Transverse colon (tissue), 4 donors: ENCODE measurements at regions of chr17 and their contacts with region 1.

Region 1: DNA sequence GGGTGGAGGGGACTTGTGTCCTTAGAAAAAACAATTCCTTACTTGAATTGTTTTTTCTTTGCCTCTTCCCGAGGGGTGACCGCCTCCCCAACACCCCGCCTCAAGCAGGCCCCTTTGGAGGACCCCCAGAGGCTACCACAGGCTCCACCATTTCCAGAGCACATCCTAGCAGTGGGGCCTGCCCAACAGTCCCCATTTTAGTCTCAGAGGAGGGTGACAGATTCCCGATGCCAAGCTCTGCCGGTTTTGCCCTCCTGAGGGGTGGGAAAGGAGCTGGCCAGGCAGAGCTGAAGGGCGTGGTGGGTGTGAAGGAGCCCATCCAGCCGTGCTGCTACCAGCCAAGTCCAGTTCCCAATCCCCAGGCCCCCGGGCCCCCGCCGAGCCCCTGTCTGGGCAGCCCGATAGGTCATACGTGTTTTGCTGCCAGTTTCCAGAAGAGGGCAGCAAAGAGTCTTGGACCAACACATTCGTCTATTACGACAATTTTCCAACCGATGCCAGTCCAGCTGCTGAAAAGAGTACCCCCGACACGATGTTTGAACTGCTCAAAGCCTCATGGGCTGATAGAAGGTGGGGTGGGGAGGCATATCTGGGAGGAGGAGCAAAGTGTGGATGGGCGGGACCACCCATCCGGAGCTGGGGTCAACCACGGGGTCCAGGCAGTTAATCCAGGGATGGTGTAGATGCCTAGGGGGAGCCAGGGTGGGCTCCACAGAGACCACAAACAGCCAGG is 18.8 kb upstream of the GAA start:
- DNase-seq: peak; percentile 57
- H3K4me3 ChIP-seq: no peak overlapping the region
- H3K27ac ChIP-seq: no peak overlapping the region
- H3K4me1 ChIP-seq: peaks cover 4 to 7% (median 6%) of the 10 kb centered on the region in 4 donors
- H3K27me3 ChIP-seq: no peaks in the 10 kb centered on the region
- CTCF ChIP-seq: peak; percentile 72 to 83 (median 81)
- EP300 ChIP-seq: no peak
- POLR2A ChIP-seq: no peak

Region 2: DNA sequence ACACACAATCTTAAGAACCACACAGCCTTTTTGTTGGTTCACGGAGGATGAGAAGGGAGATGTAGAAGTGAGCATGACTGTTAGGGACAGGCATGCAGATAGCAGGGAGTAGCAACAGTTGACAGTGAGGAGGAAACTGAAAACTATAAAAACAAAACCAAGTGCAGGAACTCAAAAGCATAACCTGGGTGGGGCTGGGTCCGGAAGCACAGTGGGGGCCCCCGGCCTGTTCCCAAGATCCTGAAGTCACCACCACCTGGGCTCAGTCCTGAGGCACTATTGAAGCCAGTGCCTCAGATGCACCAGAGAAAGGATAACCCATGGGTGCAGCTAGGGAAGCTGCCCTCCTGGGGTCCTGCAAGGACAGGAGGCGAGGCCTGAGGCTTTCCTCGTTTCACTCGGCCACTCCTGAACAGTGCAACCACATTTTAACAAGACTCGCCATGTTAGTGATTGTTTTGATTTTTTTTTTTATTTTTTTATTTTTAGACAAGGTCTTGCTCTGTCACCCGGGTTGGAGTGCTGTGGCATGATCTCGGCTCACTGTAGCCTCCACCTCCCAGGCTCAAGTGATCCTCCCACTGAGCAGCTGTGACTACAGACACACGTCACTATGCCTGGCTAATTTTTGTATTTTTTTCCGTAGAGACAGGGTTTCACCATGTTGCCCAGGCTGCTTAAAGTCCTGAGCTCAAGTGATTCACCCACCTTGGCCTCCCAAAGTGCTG is 215.6 kb before region 1 on chr17:
- in situ Hi-C with region 1: no loop called
- intact Hi-C with region 1: no loop called
- DNase-seq: no peak
- H3K4me3 ChIP-seq: no peak overlapping the region
- H3K27ac ChIP-seq: no peak overlapping the region
- H3K4me1 ChIP-seq: peaks cover 0 to 4% (median 0%) of the 10 kb centered on the region in 4 donors
- H3K27me3 ChIP-seq: no peaks in the 10 kb centered on the region
- CTCF ChIP-seq: no peak
- EP300 ChIP-seq: no peak
- POLR2A ChIP-seq: no peak

Region 3: GRCh38 chr17:80008383-80008840 is 74.2 kb before region 1 on chr17:
- in situ Hi-C with region 1: no loop called
- intact Hi-C with region 1: loop called (anchors 10 kb)
- DNase-seq: peak; percentile 86
- H3K4me3 ChIP-seq: no peak overlapping the region
- H3K27ac ChIP-seq: no peak overlapping the region
- H3K4me1 ChIP-seq: peaks cover 4 to 13% (median 8%) of the 10 kb centered on the region in 4 donors
- H3K27me3 ChIP-seq: no peaks in the 10 kb centered on the region
- CTCF ChIP-seq: peak; percentile 93 to 97 (median 95)
- EP300 ChIP-seq: no peak
- POLR2A ChIP-seq: no peak

Region 4: DNA sequence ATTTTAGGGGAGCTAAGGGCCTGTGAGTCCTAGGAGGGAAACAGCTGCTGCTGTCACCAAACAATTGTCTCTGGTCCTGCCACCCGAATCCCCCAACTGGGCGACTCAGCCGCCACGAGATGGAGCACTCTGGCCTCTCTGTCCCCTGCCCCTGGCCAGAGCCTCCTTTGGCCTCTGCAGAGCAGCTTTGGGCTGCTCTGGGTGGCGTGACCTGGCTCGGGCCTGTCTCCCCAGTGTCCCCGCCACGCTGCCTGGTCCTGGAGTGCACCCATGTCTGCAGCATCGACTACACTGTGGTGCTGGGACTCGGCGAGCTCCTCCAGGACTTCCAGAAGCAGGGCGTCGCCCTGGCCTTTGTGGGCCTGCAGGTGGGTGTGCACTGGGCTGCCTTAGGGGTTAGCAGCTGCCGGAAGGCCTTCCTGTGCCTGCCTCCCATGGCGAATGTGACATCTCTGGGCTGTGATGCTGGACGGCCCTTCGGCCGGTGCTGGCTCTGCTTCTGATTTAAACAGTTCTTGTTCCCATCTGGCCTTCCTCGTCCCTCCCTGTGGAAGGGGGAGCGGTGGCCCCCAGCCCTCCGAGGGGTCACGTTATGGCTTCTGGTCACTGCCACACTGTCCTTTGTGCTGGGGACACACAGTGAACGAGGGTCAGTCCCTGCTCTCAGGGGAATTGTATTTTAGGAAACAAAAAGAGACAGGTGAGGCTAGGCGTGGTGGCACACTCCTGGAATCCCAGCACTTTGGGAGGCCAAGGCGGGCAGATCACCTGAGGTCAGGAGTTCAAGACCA is 166.5 kb after region 1 on chr17:
- in situ Hi-C with region 1: loop called in 1 of 4 experiments (anchors 25 kb)
- intact Hi-C with region 1: no loop called
- DNase-seq: no peak
- H3K4me3 ChIP-seq: no peak overlapping the region
- H3K27ac ChIP-seq: no peak overlapping the region
- H3K4me1 ChIP-seq: peaks cover 0 to 3% (median 0%) of the 10 kb centered on the region in 4 donors
- H3K27me3 ChIP-seq: no peaks in the 10 kb centered on the region
- CTCF ChIP-seq: no peak
- EP300 ChIP-seq: no peak
- POLR2A ChIP-seq: no peak